ENCODE measurements at regions of chr9 and their contacts with region 1.

Region 1: GRCh38 chr9:36258208-36258988 is at the start of gene GNE:
- DNase-seq: peak; percentile 88 to 99
- H3K4me3 ChIP-seq: peak within 1 kb of the TSS; percentile 69 to 100
- H3K27ac ChIP-seq: peak within 1 kb of the TSS; percentile 98 to 100
- H3K4me1 ChIP-seq: peaks cover 0 to 11% of the 10 kb centered on the region in 2 donors
- H3K27me3 ChIP-seq: no peaks in the 10 kb centered on the region
- CTCF ChIP-seq: no peak
- total RNA-seq, gene GNE: 7.2 TPM

Region 2: DNA sequence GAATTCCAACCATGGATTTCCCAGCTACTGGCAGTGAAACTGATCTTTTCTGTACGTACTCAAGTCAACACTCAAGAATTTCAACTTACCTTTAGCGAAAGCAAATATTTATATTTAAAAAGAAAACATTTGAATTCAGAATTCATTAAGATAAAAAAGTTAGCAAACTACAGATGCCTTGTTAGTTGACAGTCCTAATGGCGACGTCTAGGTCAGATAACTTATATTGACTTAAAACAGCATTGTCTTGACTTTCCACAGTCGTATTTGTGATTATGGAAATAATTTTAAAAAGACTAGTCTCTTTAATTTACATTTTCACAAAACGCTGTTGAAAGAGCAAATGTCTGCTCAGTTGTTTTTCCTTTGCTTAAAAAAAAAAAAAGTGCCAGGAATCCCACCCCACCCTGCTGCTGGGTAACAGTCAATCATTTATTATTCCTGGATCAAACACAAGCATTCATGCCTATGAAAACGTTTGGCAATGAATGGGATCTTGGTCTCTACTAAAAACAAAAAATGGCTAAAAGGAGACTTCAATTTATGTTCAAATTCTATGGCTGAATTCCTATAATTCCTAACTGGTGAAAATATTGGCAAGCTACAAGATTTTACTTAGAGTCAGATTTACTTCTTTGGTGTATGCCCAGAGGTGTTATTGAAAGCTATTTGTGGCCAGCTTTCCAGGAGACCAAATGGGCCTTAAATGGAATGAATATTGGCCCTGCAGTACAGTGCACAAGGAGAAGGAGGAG is 322.5 kb before region 1 on chr9:
- intact Hi-C with region 1: loop called (anchors 5 kb)
- DNase-seq: no peak
- H3K4me3 ChIP-seq: no peak overlapping the region
- H3K27ac ChIP-seq: peak overlapping the region; percentile 69 to 87
- H3K4me1 ChIP-seq: peaks cover 6 to 46% of the 10 kb centered on the region in 2 donors
- H3K27me3 ChIP-seq: no peaks in the 10 kb centered on the region
- CTCF ChIP-seq: no peak

Region 3: DNA sequence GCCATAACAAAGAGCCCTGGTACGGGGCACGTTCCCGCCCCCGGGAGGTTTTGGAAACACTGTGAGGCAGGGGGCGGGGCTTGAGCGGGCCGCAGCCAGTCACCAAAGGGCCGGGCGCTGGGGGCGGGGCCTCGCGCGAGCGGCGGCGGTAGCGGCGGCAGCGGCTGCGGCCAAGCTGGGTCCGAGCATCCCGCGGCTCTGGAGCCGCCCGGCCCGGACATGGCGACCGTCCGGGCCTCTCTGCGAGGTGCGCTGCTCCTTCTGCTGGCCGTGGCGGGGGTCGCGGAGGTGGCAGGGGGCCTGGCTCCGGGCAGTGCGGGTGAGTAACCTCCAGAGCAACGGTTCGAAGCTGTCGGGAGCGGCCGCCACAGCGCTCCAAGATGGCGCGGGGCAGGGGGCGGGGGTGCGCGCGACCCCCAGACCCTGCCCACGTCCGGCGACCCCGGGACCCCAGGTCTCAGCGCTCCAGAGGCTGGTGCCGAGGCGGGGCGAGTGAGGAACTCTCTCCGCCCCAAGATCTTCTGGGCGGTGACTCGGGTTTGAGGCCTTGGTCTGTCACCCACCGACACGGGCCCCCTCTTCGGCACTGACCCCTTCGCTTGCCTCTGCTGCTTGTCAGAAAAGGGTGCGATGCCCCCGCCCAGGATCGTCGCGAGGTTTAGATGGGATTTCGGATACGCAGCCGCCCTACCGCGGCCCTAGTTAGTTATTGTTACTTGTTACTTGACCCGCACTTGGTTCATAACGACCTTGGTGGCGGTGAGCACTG is 221.4 kb before region 1 on chr9 and contains the start of gene RECK:
- intact Hi-C with region 1: loop called (anchors 5 kb)
- DNase-seq: peak; percentile 77 to 97
- H3K4me3 ChIP-seq: peak within 1 kb of the TSS; percentile 86 to 95
- H3K27ac ChIP-seq: peak within 1 kb of the TSS; percentile 86 to 88
- H3K4me1 ChIP-seq: peaks cover 0 to 9% of the 10 kb centered on the region in 2 donors
- H3K27me3 ChIP-seq: no peaks in the 10 kb centered on the region
- CTCF ChIP-seq: no peak
- total RNA-seq, gene RECK: 5.7 TPM

Region 4: GRCh38 chr9:36136272-36136893 is 122.0 kb before region 1 on chr9 and contains the start of gene GLIPR2:
- intact Hi-C with region 1: loop called (anchors 5 kb)
- DNase-seq: peak in 1 of 2 donors; percentile 90
- H3K4me3 ChIP-seq: peak within 1 kb of the TSS; percentile 84 to 90
- H3K27ac ChIP-seq: peak within 1 kb of the TSS; percentile 71 to 78
- H3K4me1 ChIP-seq: peaks cover 0 to 16% of the 10 kb centered on the region in 2 donors
- H3K27me3 ChIP-seq: no peaks in the 10 kb centered on the region
- CTCF ChIP-seq: peak; percentile 13 to 34 (median 20)
- total RNA-seq, gene GLIPR2: 54.4 TPM

Region 5: GRCh38 chr9:36190388-36191287 is 67.8 kb before region 1 on chr9 and contains the start of gene CLTA:
- intact Hi-C with region 1: loop called (anchors 1 kb)
- DNase-seq: peak; percentile 91 to 98
- H3K4me3 ChIP-seq: peak within 1 kb of the TSS; percentile 86 to 99
- H3K27ac ChIP-seq: peak within 1 kb of the TSS; percentile 94 to 95
- H3K4me1 ChIP-seq: peaks cover 4 to 31% of the 10 kb centered on the region in 2 donors
- H3K27me3 ChIP-seq: no peaks in the 10 kb centered on the region
- CTCF ChIP-seq: peak; percentile 43 to 63 (median 53)
- total RNA-seq, gene CLTA: 222 TPM

Region 6: GRCh38 chr9:36487482-36488388 is 229.3 kb after region 1 on chr9:
- intact Hi-C with region 1: loop called (anchors 5 kb)
- DNase-seq: peak; percentile 63 to 95
- H3K4me3 ChIP-seq: peak overlapping the region; percentile 74 to 99
- H3K27ac ChIP-seq: peak overlapping the region; percentile 87 to 93
- H3K4me1 ChIP-seq: peaks cover 0 to 25% of the 10 kb centered on the region in 2 donors
- H3K27me3 ChIP-seq: no peaks in the 10 kb centered on the region
- CTCF ChIP-seq: peak in 1 of 3 experiments; percentile 19